Posterior cingulate gyrus (tissue), 11 donors: ENCODE measurements at regions of chr10 and their contacts with region 1.

Region 1: DNA sequence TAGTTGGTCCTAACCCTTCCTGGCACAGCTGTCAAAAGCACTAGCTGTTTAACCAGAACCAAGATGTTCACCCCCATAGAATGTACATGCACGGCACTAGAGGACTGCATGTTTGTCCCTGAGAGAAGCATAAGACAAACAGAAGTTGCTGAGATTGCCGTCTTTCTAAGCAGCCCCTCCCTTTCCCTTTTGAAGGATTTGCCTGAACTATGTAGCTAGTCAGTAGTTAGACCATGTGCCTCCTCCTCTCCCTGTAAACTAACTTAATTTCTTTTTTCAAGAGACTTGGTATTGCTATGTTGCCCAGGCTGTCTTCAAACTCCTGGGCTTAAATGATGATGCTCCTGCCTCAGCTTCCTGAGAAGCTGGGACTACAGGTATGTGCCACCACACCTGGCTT is 40.7 kb downstream of the TBC1D12 start:
- DNase-seq: no peak

Region 2: DNA sequence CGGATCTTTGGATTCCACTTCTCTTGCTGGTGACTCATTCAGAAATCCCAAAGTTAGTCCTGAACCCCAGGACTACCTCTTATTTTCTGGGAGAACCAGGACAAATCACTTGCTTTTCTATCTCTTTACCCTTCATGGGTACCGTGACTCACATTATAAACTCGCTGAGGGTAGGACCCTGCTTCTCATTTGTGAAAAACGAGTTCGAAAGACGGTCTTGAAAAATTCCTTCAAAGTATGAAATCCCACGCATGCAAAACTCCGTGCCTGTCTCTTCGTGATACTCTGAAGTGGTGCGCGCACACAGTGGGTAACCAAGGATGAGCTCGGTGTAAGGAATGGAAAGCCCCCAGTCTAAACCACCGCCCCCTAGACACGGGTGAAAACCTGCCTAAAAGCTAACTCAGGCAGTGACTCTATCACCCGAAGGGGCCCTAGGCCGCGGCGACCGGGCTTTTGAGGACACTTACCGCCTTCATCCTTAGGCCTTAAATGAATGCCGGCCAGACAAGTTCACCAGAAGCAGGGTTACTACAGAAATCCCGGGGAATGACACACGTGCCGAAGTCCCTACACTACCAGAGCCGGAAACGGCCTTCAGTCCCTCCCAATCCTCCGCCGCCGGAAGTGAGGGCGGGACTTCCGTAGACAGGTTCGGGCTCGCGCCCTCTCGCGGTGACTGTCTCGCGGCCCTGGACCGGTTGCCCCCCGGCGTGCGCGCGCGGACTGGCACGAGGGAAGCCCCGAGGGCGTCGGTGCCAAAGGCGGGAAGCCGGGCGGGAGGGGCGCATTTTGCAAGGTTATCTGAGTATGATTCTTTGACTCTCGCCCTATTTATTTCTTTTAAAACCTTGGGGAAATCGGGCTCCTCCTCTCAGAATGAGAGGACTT is 80.4 kb before region 1 on chr10 and contains the start of gene NOC3L:
- intact Hi-C with region 1: loop called (anchors 5 kb)
- DNase-seq: peak; percentile 91 to 99 (median 97)

Region 3: DNA sequence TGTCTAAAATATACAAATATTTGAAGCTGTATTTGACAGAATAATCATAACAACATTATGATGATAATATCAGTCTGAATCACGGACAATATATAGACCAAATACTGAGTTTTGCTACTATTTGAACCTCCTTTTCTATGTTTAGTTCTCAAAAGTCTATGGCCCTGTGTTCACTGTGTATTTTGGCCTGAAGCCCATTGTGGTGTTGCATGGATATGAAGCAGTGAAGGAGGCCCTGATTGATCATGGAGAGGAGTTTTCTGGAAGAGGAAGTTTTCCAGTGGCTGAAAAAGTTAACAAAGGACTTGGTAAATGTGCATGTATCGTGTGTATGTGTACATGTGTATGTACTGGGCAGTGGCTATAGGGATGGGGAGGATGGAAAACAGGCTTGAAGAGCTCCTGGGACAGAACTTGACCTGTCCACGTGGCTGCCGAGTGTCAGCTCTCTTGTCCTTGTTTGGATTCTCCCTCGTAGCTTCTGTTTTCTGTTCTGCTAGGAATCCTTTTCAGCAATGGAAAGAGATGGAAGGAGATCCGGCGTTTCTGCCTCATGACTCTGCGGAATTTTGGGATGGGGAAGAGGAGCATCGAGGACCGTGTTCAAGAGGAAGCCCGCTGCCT is 244.7 kb after region 1 on chr10:
- intact Hi-C with region 1: no loop called
- DNase-seq: no peak